ENCODE measurements at regions of chr3 and their contacts with region 1.

Region 1: DNA sequence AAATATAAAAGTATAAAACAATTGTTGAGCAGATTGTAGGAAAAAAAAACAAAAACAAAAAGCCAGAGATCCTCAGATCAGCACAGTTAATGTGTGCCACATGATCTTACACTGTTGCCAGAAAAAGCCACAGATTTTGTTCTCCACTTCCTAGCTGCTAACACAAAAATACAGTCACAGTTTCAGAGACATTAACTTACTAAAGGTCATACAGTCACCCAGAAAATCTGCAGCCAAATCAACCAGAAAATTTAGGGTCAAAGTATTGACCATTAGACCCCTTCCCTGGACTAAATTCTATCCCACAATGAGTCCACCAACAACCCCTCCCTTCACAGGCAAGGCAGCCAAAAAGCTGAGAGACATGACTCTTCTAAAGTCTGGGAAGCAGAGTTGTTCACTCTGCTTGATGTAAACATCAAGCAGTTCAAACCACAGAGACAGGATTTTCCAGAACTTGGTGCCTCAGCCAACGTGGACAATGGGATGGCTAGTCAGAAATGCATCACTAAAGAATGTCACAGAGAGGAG is 59.1 kb downstream of the SST start:
- DNase-seq: no peak
- CTCF ChIP-seq: no peak

Region 2: GRCh38 chr3:187368251-187369088 is 242.6 kb before region 1 on chr3 and contains the start of gene RTP4:
- CTCF ChIA-PET with region 1: no interaction called
- POLR2A ChIA-PET with region 1: no interaction called
- DNase-seq: peak; percentile 66
- CTCF ChIP-seq: no peak

Region 3: GRCh38 chr3:187516446-187517185 is 94.4 kb before region 1 on chr3:
- CTCF ChIA-PET with region 1: no interaction called
- POLR2A ChIA-PET with region 1: no interaction called
- DNase-seq: no peak
- CTCF ChIP-seq: no peak

Region 4: GRCh38 chr3:187594272-187594671 is 16.8 kb before region 1 on chr3:
- CTCF ChIA-PET with region 1: interaction called, 10 read pairs
- POLR2A ChIA-PET with region 1: no interaction called
- DNase-seq: no peak
- CTCF ChIP-seq: no peak

Region 5: DNA sequence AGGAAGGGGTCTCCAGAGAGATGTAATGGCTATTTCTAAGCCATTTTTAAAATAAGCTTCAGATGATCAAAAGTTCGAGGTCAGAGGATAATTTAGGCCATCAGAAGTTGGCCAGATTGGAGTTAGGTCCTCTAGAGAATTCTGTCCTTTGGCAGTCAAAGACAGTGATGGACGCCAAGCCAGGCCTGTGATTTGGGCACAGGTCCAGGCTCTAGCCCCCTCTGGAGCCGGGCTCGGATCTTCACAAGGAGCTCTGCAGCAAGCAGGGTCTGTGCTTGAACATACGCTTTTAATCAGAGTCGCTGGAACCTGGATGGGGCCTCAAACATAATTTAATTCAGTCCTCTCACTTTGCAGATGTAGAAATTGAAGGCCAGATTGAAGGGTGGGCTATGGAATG is 285.6 kb after region 1 on chr3:
- CTCF ChIA-PET with region 1: no interaction called
- POLR2A ChIA-PET with region 1: no interaction called
- DNase-seq: no peak
- CTCF ChIP-seq: no peak

Measured in GM10248 (cell line).